Esophagus muscularis mucosa (tissue), 4 donors: ENCODE measurements at regions of chr2 and their contacts with region 1.

Region 1: DNA sequence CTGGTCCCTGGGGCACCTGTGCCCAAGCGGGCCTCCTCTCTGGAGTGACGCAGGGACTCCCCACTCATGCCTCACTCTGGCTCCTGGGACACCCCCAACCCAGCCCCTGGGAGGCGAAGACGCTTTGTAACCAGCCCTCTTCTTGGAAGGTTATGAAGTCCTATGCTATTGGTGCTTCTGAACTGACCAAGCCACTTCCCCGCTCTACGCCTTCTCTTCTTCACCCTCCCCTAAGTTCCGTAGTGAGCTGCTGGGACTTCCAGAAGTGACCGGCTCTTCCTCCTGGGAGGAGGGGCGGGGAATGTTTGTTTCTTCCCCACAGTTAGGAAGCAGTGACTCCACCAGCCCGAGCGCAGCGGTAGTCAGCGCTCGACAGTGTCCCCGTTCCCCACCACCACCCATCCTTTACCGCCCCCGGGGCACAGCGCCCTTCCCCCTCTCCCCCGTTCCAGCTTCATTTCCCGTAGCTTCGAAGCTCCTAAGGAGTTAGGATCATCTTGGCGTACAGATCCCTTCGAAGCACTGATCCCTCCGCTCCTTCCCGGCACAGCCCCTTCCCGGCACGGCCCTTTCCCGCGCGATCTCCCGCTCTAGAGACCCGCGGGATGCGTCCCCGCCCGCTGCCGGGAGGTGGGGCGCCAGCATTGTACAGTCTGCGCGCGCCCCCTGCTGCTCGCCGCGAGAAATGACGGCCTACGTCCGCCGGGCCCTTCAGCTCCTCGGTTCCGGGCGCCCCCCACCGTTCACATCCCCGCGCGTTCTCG is 25.3 kb upstream of the NOTO start:
- DNase-seq: peak; percentile 97
- H3K4me3 ChIP-seq: peak overlapping the region; percentile 54 to 64 (median 62)
- H3K27ac ChIP-seq: peak overlapping the region; percentile 66 to 79 (median 77)
- H3K4me1 ChIP-seq: peaks cover 23 to 31% (median 29%) of the 10 kb centered on the region in 4 donors
- H3K27me3 ChIP-seq: peaks cover 0 to 70% (median 13%) of the 10 kb centered on the region in 4 donors
- CTCF ChIP-seq: peak in 2 of 3 experiments; percentile 97 to 98
- EP300 ChIP-seq: peak; percentile 56
- POLR2A ChIP-seq: no peak

Region 2: DNA sequence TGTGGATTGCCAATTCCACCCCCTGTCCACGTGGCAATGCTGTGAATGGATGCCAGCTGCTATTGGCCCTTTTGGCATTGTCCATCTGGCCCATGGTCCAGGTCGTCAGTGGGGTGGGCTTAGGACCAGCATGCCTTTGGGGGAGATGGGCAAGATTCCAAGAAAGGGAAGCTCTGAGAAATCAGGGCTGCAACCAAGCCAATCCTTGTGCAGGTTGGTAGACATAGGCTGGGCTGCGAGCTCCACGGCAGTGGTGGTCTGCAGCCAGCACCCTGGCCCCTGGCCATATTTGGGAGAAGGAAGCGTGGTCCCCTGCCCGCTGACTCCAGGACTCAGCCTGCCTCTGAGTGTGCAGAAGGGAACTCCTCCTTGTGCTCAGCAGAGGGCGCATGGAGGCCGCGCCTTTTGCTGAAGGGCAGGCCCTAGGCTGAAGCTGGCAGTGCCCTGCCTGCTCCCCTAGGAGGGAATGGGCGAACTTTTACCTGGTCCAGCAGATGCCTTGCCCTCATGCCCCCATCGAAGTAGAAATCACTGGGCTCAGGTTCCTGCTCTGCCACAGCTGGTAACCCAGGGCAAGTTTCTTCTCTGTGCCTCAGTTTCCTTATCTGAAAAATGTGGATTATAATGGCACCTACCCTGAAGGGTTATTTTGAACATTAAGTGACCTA is 284.4 kb before region 1 on chr2:
- intact Hi-C with region 1: loop called (anchors 5 kb)
- DNase-seq: no peak
- H3K4me3 ChIP-seq: no peak overlapping the region
- H3K27ac ChIP-seq: no peak overlapping the region
- H3K4me1 ChIP-seq: peaks cover 25 to 40% (median 32%) of the 10 kb centered on the region in 4 donors
- H3K27me3 ChIP-seq: peaks cover 0 to 31% (median 0%) of the 10 kb centered on the region in 4 donors
- CTCF ChIP-seq: peak; percentile 61 to 74 (median 64)
- EP300 ChIP-seq: no peak
- POLR2A ChIP-seq: no peak

Region 3: GRCh38 chr2:72993147-72993932 is 183.7 kb before region 1 on chr2:
- intact Hi-C with region 1: loop called (anchors 1 kb)
- DNase-seq: no peak
- H3K4me3 ChIP-seq: no peak overlapping the region
- H3K27ac ChIP-seq: no peak overlapping the region
- H3K4me1 ChIP-seq: peaks cover 0 to 5% (median 0%) of the 10 kb centered on the region in 4 donors
- H3K27me3 ChIP-seq: no peaks in the 10 kb centered on the region
- CTCF ChIP-seq: peak; percentile 69 to 84 (median 77)
- EP300 ChIP-seq: no peak
- POLR2A ChIP-seq: no peak

Region 4: GRCh38 chr2:73071360-73072133 is 105.5 kb before region 1 on chr2 and contains the start of gene SFXN5:
- intact Hi-C with region 1: loop called (anchors 5 kb)
- DNase-seq: peak; percentile 100
- H3K4me3 ChIP-seq: peak within 1 kb of the TSS; percentile 65 to 94 (median 82)
- H3K27ac ChIP-seq: peak within 1 kb of the TSS; percentile 83 to 97 (median 93)
- H3K4me1 ChIP-seq: peaks cover 34 to 47% (median 40%) of the 10 kb centered on the region in 4 donors
- H3K27me3 ChIP-seq: no peaks in the 10 kb centered on the region
- CTCF ChIP-seq: peak in 2 of 3 experiments; percentile 18 to 36
- EP300 ChIP-seq: no peak
- POLR2A ChIP-seq: no peak
- total RNA-seq, gene SFXN5: 5.8 to 10.0 (median 6.8) TPM

Region 5: GRCh38 chr2:73085691-73086360 is 91.2 kb before region 1 on chr2:
- intact Hi-C with region 1: loop called (anchors 5 kb)
- DNase-seq: peak; percentile 97
- H3K4me3 ChIP-seq: no peak overlapping the region
- H3K27ac ChIP-seq: no peak overlapping the region
- H3K4me1 ChIP-seq: peaks cover 22 to 42% (median 34%) of the 10 kb centered on the region in 4 donors
- H3K27me3 ChIP-seq: no peaks in the 10 kb centered on the region
- CTCF ChIP-seq: peak; percentile 86 to 98 (median 92)
- EP300 ChIP-seq: no peak
- POLR2A ChIP-seq: no peak